A549 (cell line): ENCODE measurements at regions of chr10 and their contacts with region 1.

Region 1: GRCh38 chr10:69800109-69800508 is 1.6 kb upstream of the COL13A1 start:
- DNase-seq: peak; percentile 71 to 72
- ATAC-seq: peak; percentile 70 to 85; a peak in 5 of 6 replicates
- H3K4me3 ChIP-seq: no peak overlapping the region
- H3K27ac ChIP-seq: no peak overlapping the region
- H3K4me1 ChIP-seq: peaks cover 9% of the 10 kb centered on the region; the same call in 2 of the 3 replicates
- CTCF ChIP-seq: peak; percentile 72
- EP300 ChIP-seq: no peak
- POLR2A ChIP-seq: no peak
- RAD21 ChIP-seq: peak; percentile 53 to 72

Region 2: DNA sequence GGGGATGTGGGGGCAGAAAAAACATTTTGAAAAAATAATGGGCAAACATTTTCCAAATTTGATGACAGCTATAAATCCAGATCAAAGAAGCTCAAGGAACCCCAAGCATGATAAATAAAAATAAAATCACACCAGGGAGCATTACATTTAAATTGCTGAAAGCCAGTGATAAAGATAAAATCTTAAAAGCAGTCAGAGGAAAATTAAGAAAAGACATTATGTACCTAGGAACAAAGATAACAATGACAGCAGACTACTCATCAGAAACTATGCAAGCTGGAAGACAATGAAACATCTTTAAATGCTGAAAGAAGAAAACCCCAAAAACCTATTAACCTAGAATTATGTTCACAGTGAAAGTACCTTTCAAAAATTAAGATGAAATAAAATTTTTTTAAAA is 250.2 kb before region 1 on chr10:
- CTCF ChIA-PET with region 1: no interaction called
- POLR2A ChIA-PET with region 1: no interaction called
- DNase-seq: no peak
- ATAC-seq: no peak
- H3K4me3 ChIP-seq: no peak overlapping the region
- H3K27ac ChIP-seq: no peak overlapping the region
- H3K4me1 ChIP-seq: no peaks in the 10 kb centered on the region
- CTCF ChIP-seq: no peak
- EP300 ChIP-seq: no peak
- POLR2A ChIP-seq: no peak
- RAD21 ChIP-seq: no peak

Region 3: GRCh38 chr10:69562731-69563259 is 237.3 kb before region 1 on chr10:
- CTCF ChIA-PET with region 1: no interaction called
- POLR2A ChIA-PET with region 1: no interaction called
- DNase-seq: no peak
- ATAC-seq: no peak
- H3K4me3 ChIP-seq: no peak overlapping the region
- H3K27ac ChIP-seq: no peak overlapping the region
- H3K4me1 ChIP-seq: no peaks in the 10 kb centered on the region
- CTCF ChIP-seq: no peak
- EP300 ChIP-seq: no peak
- POLR2A ChIP-seq: no peak
- RAD21 ChIP-seq: no peak

Region 4: DNA sequence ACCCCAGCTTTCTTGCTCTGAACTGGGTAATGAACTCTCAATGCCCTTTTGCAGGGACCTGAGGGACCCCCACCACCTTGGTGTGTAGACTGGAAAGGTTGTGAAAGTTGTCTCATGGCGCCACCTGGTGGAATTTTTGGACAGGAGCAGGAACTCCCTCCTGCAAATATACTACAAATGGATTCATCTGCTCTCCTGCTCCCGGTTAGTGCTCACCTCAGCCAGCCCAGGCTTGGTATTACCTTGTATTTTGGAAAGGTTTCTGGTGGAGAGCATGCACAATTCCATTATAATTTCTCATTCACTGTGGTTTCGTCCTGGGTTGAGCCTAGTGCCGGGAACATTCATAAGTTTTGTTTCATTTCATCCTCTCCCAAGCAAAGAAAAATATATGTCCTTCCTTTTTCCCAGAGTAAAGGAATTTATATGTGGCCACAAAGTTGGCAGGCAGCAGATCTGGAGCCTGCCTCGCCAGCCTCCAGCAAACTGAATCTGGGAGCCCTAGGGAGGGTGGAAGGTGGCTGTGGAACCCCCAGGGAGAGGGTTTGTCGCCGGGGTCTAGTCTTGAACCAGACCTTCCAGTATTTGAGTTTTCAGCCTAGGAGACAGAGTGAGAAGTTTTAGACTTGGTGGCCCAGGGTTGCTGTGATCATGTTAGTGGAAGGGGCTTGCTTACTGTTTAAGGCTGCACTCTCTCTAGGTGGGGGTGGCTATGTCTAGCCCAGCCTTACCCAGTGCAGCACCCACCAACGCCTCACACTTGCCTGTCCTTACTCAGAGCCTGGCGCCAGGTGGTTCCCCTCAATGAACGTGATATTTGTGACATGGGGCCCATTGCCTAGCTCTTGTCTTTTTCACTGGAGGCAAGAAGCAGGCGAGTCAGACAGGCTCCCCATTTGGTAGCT is 160.6 kb before region 1 on chr10:
- CTCF ChIA-PET with region 1: interaction called, 58 read pairs
- POLR2A ChIA-PET with region 1: no interaction called
- DNase-seq: peak; percentile 73 to 80
- ATAC-seq: peak; percentile 58 to 84
- H3K4me3 ChIP-seq: no peak overlapping the region
- H3K27ac ChIP-seq: no peak overlapping the region
- H3K4me1 ChIP-seq: no peaks in the 10 kb centered on the region
- CTCF ChIP-seq: peak; percentile 95
- EP300 ChIP-seq: no peak
- POLR2A ChIP-seq: no peak
- RAD21 ChIP-seq: peak; percentile 93

Region 5: GRCh38 chr10:69716711-69717560 is 83.2 kb before region 1 on chr10:
- CTCF ChIA-PET with region 1: interaction called, 16 read pairs
- POLR2A ChIA-PET with region 1: no interaction called
- DNase-seq: peak; percentile 58 to 84
- ATAC-seq: peak; percentile 84 to 95
- H3K4me3 ChIP-seq: no peak overlapping the region
- H3K27ac ChIP-seq: no peak overlapping the region
- H3K4me1 ChIP-seq: no peaks in the 10 kb centered on the region
- CTCF ChIP-seq: peak; percentile 83
- EP300 ChIP-seq: no peak
- POLR2A ChIP-seq: no peak
- RAD21 ChIP-seq: peak; percentile 81 to 89

Region 6: DNA sequence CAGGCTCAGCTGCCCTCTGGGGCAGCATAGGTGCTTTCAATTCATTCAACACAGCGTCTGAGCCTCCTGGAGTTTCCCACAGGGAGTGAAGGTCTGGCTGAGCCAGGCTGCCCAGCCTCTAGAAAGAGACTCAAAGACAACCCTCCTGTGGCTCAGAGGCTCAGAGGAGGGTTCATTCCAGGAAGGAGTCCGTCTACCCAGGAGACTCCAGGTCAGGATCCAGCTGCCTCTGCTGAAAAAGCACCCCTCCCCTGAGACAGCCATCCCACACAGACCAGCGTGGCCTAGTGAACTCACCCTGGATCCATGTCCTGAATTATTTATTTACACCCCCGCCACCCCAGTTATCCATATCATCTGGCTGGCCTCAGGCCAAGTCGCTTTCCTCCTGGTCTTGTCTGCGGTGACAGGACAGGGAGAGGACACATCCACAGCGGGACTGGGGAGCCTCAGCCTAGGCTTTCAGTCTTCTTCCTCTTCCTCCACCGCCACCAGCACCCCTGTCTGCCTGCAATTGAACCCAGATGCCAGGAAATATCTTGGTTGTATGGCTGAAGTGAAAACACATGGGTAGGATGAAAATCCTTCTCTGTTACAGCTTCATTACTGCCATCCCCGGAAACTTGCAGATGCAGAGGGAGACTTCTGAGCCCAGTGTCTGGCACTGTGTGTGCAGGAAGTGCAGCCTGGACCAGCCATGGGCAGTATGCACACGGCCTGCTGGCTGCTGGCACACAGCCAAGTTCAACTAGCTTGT is 42.4 kb before region 1 on chr10:
- CTCF ChIA-PET with region 1: interaction called, 10 read pairs
- POLR2A ChIA-PET with region 1: no interaction called
- DNase-seq: no peak
- ATAC-seq: no peak; a peak in 1 of 6 replicates
- H3K4me3 ChIP-seq: no peak overlapping the region
- H3K27ac ChIP-seq: no peak overlapping the region
- H3K4me1 ChIP-seq: no peaks in the 10 kb centered on the region
- CTCF ChIP-seq: no peak
- EP300 ChIP-seq: no peak
- POLR2A ChIP-seq: no peak
- RAD21 ChIP-seq: no peak

Region 7: GRCh38 chr10:69774596-69774995 is 25.5 kb before region 1 on chr10:
- CTCF ChIA-PET with region 1: interaction called, 32 read pairs
- POLR2A ChIA-PET with region 1: no interaction called
- DNase-seq: no peak
- ATAC-seq: peak in 1 of 2 experiments; percentile 36; a peak in 2 of 6 replicates
- H3K4me3 ChIP-seq: no peak overlapping the region
- H3K27ac ChIP-seq: no peak overlapping the region
- H3K4me1 ChIP-seq: peaks cover 9% of the 10 kb centered on the region
- CTCF ChIP-seq: no peak; the same call in 2 of the 3 replicates
- EP300 ChIP-seq: no peak
- POLR2A ChIP-seq: no peak
- RAD21 ChIP-seq: 0 out of 5 replicates have a peak, but pooled peaks of 1 of the 2 experiments have one; percentile 8

Region 8: GRCh38 chr10:69819716-69820506 is 19.8 kb after region 1 on chr10:
- CTCF ChIA-PET with region 1: interaction called, 27 read pairs
- POLR2A ChIA-PET with region 1: no interaction called
- DNase-seq: no peak
- ATAC-seq: no peak
- H3K4me3 ChIP-seq: no peak overlapping the region
- H3K27ac ChIP-seq: no peak overlapping the region
- H3K4me1 ChIP-seq: no peaks in the 10 kb centered on the region
- CTCF ChIP-seq: no peak
- EP300 ChIP-seq: no peak
- POLR2A ChIP-seq: no peak
- RAD21 ChIP-seq: no peak